ENCODE measurements at regions of chr6 and their contacts with region 1.

Region 1: GRCh38 chr6:111642463-111643158 is 36.9 kb upstream of the TRAF3IP2 start:
- DNase-seq: peak; percentile 66
- ATAC-seq: peak; percentile 90
- H3K4me3 ChIP-seq: no peak overlapping the region
- H3K27ac ChIP-seq: no peak overlapping the region
- H3K4me1 ChIP-seq: no peaks in the 10 kb centered on the region; the same call in none of the 2 replicates
- H3K27me3 ChIP-seq: no peaks in the 10 kb centered on the region
- CTCF ChIP-seq: peak; percentile 79
- POLR2A ChIP-seq: no peak
- RAD21 ChIP-seq: peak; percentile 90

Region 2: DNA sequence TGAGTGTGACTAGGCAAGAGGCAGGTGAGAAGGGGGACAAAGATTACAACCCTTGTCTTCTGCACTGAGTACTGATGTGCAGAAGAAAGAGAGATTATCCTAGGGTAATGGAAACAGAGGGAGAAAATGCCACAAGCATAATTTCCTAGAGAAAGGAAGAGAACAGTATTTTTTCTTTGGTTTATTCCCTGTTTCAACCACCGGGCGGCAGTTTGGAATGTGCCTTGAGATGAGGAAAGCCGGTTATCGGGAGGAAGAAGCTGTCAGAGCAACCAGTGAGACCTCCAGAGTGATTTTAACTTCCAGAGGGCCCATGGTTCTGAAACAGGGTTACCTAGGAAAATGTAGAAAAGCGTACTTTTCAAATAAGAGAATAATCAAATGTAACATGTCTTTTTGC is 281.0 kb before region 1 on chr6:
- CTCF ChIA-PET with region 1: no interaction called
- POLR2A ChIA-PET with region 1: no interaction called
- dilution Hi-C with region 1: no loop called
- in situ Hi-C with region 1: no loop called
- intact Hi-C with region 1: loop called (anchors 1 kb)
- DNase-seq: peak; percentile 43
- ATAC-seq: peak; percentile 73
- H3K4me3 ChIP-seq: no peak overlapping the region
- H3K27ac ChIP-seq: no peak overlapping the region
- H3K4me1 ChIP-seq: peaks cover 4% of the 10 kb centered on the region
- H3K27me3 ChIP-seq: no peaks in the 10 kb centered on the region
- CTCF ChIP-seq: peak; percentile 52
- POLR2A ChIP-seq: no peak
- RAD21 ChIP-seq: peak; percentile 65

Region 3: DNA sequence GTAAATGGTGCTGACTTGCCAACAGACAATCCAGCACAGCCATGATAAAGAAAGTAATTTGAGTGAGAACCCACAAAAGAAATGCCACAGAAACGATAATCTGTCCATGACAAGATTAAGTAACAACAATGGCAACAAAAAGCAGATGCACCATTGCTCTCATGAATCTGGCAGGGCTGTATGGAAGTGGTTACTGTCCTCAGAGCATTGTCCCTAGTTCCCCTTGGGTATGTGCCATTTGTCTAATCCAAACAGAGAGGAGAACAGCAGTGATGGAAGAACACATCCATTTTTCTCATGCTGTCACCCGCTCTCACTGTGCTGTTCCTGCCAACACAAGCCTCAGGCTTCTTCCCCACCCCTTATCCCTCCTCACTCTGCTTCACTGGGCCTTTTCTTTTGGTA is 225.4 kb before region 1 on chr6:
- CTCF ChIA-PET with region 1: no interaction called
- POLR2A ChIA-PET with region 1: no interaction called
- dilution Hi-C with region 1: no loop called
- in situ Hi-C with region 1: no loop called
- intact Hi-C with region 1: loop called (anchors 5 kb)
- DNase-seq: peak; percentile 17
- ATAC-seq: peak; percentile 68
- H3K4me3 ChIP-seq: no peak overlapping the region
- H3K27ac ChIP-seq: 0 out of 2 replicates have a peak overlapping the region, but pooled peaks have one; percentile 4
- H3K4me1 ChIP-seq: peaks cover 6% of the 10 kb centered on the region
- H3K27me3 ChIP-seq: no peaks in the 10 kb centered on the region
- CTCF ChIP-seq: no peak
- POLR2A ChIP-seq: no peak
- RAD21 ChIP-seq: no peak